ENCODE measurements at regions of chr2 and their contacts with region 1.

Region 1: GRCh38 chr2:56183643-56184499 is at the start of gene CCDC85A:
- DNase-seq: no peak
- H3K4me3 ChIP-seq: peak within 1 kb of the TSS; percentile 64
- H3K27me3 ChIP-seq: peaks cover 8% of the 10 kb centered on the region
- CTCF ChIP-seq: peak; percentile 89
- polyA plus RNA-seq, gene CCDC85A: 3.1 and 4.2 TPM in 2 replicates

Region 2: GRCh38 chr2:57497489-57498096 is 1313.7 kb after region 1 on chr2:
- CTCF ChIA-PET with region 1: interaction called, 17 read pairs
- POLR2A ChIA-PET with region 1: no interaction called
- DNase-seq: no peak
- H3K4me3 ChIP-seq: no peak overlapping the region
- H3K27me3 ChIP-seq: no peaks in the 10 kb centered on the region
- CTCF ChIP-seq: peak; percentile 78

Region 3: GRCh38 chr2:57516698-57517340 is 1332.9 kb after region 1 on chr2:
- CTCF ChIA-PET with region 1: interaction called, 12 read pairs
- POLR2A ChIA-PET with region 1: no interaction called
- DNase-seq: peak; percentile 6
- H3K4me3 ChIP-seq: no peak overlapping the region
- H3K27me3 ChIP-seq: no peaks in the 10 kb centered on the region
- CTCF ChIP-seq: peak; percentile 40; the same call in 1 of the 2 replicates